Heart left ventricle (tissue), 16 donors: ENCODE measurements at regions of chr3 and their contacts with region 1.

Region 1: DNA sequence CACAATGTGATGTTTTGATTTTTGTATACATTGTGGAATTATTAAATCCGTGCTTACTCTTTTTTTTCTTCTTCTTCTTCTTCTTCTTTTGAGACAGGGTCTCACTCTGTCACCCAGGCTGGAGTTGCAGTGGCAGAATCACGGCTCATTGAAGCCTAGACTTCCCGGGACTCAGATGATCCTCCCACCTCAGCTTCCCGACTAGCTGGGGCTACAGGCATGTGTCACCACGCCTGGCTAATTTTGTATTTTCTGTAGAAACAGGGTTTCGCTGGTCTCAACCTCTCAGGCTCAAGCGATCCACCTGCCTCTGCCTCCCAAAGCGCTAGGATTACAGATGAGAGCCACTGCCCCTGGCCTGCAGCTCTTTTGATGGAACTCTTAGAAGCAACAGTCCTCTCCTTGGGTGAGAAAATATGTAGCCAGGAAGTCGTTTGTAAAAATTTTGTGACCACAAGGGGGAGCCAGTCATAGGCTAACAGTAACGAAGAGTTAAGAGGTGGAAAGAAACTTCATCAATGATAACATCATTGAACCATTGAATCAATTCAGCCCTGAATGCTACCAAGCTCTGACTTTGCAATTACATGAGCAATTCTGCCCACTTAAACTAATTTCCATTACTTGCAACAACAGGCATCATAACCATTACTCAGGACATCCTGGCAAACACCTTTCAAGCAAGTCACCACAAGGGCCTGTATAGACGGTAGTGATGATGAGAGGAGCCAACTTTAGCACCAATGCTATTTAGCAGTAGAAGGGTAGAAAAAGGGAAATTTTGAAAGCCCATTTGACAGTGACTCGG is 16.7 kb upstream of the CMTM7 start:
- DNase-seq: peak in 3 of 5 donors; percentile 40 to 60 (median 54)
- ATAC-seq: peak in 3 of 4 donors; percentile 58 to 67 (median 62)
- H3K4me3 ChIP-seq: no peak overlapping the region
- H3K27ac ChIP-seq: no peak overlapping the region
- H3K4me1 ChIP-seq: peaks cover 0 to 13% (median 0%) of the 10 kb centered on the region in 12 donors
- H3K27me3 ChIP-seq: no peaks in the 10 kb centered on the region
- CTCF ChIP-seq: peak; percentile 59 to 80 (median 65)
- POLR2A ChIP-seq: no peak

Region 2: GRCh38 chr3:32391643-32392535 is 16.9 kb after region 1 on chr3 and contains the start of gene CMTM7:
- intact Hi-C with region 1: loop called in 1 of 10 experiments (anchors 2 kb)
- DNase-seq: peak; percentile 73 to 87 (median 75)
- ATAC-seq: peak; percentile 60 to 94 (median 87)
- H3K4me3 ChIP-seq: peak within 1 kb of the TSS; percentile 51 to 98 (median 77)
- H3K27ac ChIP-seq: peak within 1 kb of the TSS; percentile 14 to 95 (median 84)
- H3K4me1 ChIP-seq: peaks cover 0 to 43% (median 9%) of the 10 kb centered on the region in 12 donors
- H3K27me3 ChIP-seq: no peaks in the 10 kb centered on the region
- CTCF ChIP-seq: no peak
- POLR2A ChIP-seq: peak in 1 of 2 donors; percentile 67
- total RNA-seq, gene CMTM7: 2.3 to 16.8 (median 3.6) TPM

Region 3: DNA sequence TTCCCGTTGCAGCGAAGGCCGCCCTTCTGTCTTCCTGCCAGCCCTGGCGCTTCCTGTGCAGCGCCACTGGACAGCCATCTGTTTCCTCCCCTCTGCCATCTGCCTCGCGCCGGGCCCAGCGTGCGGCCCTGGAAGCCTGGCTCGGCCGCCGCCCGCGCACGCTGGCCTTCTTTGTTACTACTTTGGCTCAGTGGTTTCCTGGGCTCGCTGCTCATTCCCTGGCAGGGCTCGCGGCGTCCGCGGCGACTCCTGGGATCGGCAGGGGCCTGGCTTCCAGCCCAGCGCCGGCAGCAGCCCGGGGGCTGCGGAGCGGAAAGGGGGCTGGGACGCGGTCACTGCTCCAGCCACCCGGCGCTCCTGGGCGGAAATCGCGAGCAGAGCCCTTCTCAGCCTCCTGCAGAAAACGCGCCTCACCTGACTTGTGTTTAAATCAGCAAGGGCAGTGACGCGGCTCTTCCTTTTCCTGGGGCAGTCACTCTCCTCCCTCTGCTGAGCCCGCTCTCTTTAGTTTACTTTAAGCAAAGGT is 26.6 kb after region 1 on chr3:
- intact Hi-C with region 1: loop called in 1 of 10 experiments (anchors 2 kb)
- DNase-seq: peak; percentile 85 to 94 (median 86)
- ATAC-seq: peak; percentile 70 to 94 (median 90)
- H3K4me3 ChIP-seq: peak overlapping the region; percentile 2 to 61 (median 50)
- H3K27ac ChIP-seq: peak overlapping the region; percentile 70 to 97 (median 86)
- H3K4me1 ChIP-seq: peaks cover 0 to 93% (median 27%) of the 10 kb centered on the region in 12 donors
- H3K27me3 ChIP-seq: no peaks in the 10 kb centered on the region
- CTCF ChIP-seq: no peak
- POLR2A ChIP-seq: peak in 1 of 2 donors; percentile 25

Region 4: GRCh38 chr3:32467333-32468070 is 92.5 kb after region 1 on chr3:
- intact Hi-C with region 1: loop called (anchors 1 to 5 kb)
- DNase-seq: peak; percentile 59 to 89 (median 68)
- ATAC-seq: peak; percentile 40 to 94 (median 88)
- H3K4me3 ChIP-seq: peak overlapping the region in 10 of 12 donors; percentile 25 to 57 (median 46)
- H3K27ac ChIP-seq: peak overlapping the region in 2 of 12 donors; percentile 35 to 51
- H3K4me1 ChIP-seq: peaks cover 0 to 36% (median 9%) of the 10 kb centered on the region in 12 donors
- H3K27me3 ChIP-seq: no peaks in the 10 kb centered on the region
- CTCF ChIP-seq: peak; percentile 98 to 100 (median 99)
- POLR2A ChIP-seq: peak in 1 of 2 donors; percentile 15

Region 5: DNA sequence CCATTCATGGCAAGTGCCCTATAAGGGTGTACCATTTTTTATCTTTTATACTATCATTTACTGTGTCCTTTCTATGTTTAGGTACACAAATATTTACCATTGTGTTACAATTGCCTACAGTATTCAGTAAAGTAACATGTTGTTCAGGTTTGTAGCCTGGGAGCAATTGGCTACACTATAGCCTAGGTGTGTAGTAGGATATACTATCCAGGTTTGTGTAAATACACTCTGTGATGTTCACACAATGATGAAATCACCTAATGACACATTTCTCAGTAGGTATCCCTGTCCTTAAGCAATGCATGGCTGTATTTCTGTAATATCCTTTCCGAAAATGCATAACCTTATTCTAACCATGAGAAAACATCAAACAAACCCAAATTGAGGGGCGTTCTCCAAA is 292.1 kb after region 1 on chr3:
- intact Hi-C with region 1: loop called in 3 of 10 experiments (anchors 10 kb)
- DNase-seq: no peak
- ATAC-seq: no peak
- H3K4me3 ChIP-seq: no peak overlapping the region
- H3K27ac ChIP-seq: no peak overlapping the region
- H3K4me1 ChIP-seq: no peaks in the 10 kb centered on the region
- H3K27me3 ChIP-seq: no peaks in the 10 kb centered on the region
- CTCF ChIP-seq: no peak
- POLR2A ChIP-seq: no peak